OCI-LY7 (cell line): ENCODE measurements at regions of chr7 and their contacts with region 1.

Region 1: GRCh38 chr7:49333180-49333881 is 409.0 kb downstream of the CDC14C start:
- DNase-seq: peak; percentile 94
- H3K4me3 ChIP-seq: peak overlapping the region; percentile 45
- H3K27ac ChIP-seq: peak overlapping the region; percentile 100
- H3K4me1 ChIP-seq: peaks cover 58% of the 10 kb centered on the region
- CTCF ChIP-seq: no peak

Region 2: DNA sequence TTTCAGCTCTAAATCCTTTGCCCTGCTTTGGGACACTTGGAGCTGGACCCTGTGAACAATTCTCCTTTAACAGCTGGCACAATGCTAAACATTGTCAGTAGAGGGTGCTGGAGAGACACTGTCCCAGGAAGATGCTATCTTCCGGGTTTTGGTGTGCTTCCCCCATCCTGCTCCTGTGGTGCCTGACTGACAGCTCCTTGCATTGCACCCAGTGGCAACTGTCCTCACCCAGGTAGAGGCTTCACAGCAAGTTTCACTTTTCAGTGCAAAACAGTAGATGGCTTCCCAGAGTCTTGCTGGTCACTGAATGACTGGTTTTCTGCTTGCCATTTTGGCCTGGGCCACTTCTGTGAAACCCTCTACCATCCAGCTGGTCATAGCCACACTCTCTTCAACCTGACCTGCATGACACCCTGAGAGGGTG is 331.7 kb before region 1 on chr7:
- CTCF ChIA-PET with region 1: no interaction called
- POLR2A ChIA-PET with region 1: no interaction called
- intact Hi-C with region 1: loop called (anchors 10 kb)
- DNase-seq: peak; percentile 83
- H3K4me3 ChIP-seq: no peak overlapping the region
- H3K27ac ChIP-seq: no peak overlapping the region
- H3K4me1 ChIP-seq: peaks cover 6% of the 10 kb centered on the region
- CTCF ChIP-seq: peak; percentile 89

Region 3: DNA sequence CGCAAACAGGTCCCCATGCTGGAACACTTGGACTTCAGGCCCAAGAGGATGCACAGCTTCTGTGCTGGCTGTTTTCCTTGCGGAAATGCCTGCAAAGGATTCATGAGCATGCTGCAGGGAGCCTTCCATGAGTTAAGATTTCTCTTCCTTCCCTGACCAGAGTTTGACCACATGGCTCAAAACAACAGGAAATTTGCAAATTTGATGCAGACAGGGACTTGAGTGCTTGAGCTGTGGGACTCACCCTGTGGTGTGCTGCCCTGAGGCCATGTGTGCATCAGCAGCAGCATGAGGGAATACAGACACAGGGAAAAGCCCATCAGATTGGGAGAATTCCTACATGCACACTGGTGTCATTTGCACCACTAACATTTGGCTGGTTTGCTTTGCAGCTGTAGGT is 213.6 kb before region 1 on chr7:
- CTCF ChIA-PET with region 1: no interaction called
- POLR2A ChIA-PET with region 1: no interaction called
- intact Hi-C with region 1: no loop called
- DNase-seq: no peak
- H3K4me3 ChIP-seq: no peak overlapping the region
- H3K27ac ChIP-seq: no peak overlapping the region
- H3K4me1 ChIP-seq: no peaks in the 10 kb centered on the region
- CTCF ChIP-seq: no peak

Region 4: GRCh38 chr7:49371771-49372170 is 38.4 kb after region 1 on chr7:
- CTCF ChIA-PET with region 1: no interaction called
- POLR2A ChIA-PET with region 1: no interaction called
- intact Hi-C with region 1: no loop called
- DNase-seq: no peak
- H3K4me3 ChIP-seq: no peak overlapping the region
- H3K27ac ChIP-seq: no peak overlapping the region
- H3K4me1 ChIP-seq: peaks cover 4% of the 10 kb centered on the region
- CTCF ChIP-seq: no peak

Region 5: DNA sequence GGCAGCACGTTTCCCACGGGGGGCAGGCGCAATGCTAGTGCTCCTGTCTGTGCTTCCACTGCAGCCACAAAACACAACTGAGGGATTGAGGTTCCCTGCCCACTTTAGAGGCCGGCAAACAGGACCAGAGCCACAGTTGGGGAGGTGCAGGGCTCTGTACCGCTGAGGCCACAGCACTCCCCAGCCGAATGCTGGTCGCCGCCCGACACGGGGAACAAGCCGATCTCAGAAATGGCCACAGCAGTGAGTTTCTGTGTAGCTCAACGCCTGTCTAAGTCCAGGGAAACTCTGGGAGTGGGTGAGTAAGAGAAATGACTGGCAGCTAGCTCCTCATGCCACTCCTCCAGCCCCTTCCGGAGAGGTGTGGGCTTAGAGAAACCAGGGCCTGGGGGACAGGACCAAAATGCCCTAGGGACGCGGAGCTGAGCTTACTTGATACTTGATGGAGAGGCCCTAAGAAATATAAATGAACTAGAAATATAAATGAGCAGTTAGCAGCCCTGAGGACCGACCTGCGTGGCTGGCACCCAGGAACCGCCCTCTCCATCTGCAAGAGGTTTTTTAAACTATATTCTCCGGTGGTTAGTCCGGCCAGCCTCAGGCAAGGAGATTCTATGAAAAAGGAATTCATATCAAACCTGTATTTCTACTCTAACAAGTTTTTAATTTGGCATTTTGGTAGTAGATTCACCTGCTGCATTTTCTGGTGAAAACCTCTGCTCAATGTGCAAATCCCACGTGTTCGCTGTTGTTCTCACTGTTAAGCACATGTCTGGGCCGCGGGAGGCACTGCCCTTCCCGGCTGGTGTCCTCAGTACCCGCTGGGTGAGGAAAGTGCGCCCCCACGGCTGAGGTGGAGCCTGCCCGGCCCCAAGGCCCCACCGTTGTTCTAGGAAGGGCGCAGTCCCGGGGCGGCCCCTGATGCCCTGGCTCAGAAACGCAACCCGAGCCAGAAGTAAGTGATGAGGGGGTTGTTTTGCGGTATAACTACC is 246.4 kb after region 1 on chr7:
- CTCF ChIA-PET with region 1: no interaction called
- POLR2A ChIA-PET with region 1: no interaction called
- intact Hi-C with region 1: loop called (anchors 1 kb)
- DNase-seq: no peak
- H3K4me3 ChIP-seq: no peak overlapping the region
- H3K27ac ChIP-seq: no peak overlapping the region
- H3K4me1 ChIP-seq: peaks cover 41% of the 10 kb centered on the region
- CTCF ChIP-seq: no peak

Region 6: DNA sequence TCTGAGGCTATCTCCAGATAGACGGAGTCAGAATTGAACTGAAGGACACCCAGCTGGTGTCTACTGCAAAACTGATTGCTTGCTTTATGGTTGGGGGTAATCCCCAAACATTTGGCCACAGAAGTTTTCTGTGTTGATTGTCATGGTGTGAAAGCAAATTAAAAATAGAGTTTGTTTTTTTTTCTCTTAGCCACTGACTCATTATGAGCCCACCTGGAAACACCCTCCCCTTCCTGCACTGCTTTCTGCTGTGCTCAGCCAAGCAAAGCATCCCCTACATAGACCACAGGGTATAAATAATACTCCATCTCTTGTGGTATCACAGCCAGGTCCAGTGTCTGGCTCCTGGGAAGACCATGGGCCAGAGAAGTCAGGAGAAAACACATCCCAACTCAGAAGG is 433.6 kb after region 1 on chr7:
- CTCF ChIA-PET with region 1: no interaction called
- POLR2A ChIA-PET with region 1: no interaction called
- intact Hi-C with region 1: loop called (anchors 2 kb)
- DNase-seq: peak; percentile 93
- H3K4me3 ChIP-seq: peak overlapping the region; percentile 49
- H3K27ac ChIP-seq: peak overlapping the region; percentile 92
- H3K4me1 ChIP-seq: peaks cover 88% of the 10 kb centered on the region
- CTCF ChIP-seq: no peak

Region 7: DNA sequence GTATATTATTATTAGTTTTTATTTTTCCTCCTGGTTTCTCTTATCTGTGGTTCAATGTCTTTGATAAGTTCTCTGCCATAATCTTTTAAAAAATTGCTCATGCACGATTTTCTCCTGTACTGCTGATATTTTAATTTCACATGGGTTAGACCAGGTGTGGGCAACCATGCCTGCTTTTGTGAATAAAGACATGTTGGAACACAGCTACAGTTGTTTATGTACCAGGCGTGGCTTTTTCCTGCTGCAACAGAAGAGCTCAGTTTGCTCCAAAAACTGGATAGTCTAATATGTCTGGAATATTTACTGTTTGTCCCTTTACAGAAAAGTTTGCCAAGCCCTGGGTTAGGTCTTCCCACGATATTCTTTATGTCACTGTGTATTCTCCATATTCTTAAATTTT is 545.3 kb after region 1 on chr7:
- CTCF ChIA-PET with region 1: no interaction called
- POLR2A ChIA-PET with region 1: no interaction called
- intact Hi-C with region 1: loop called (anchors 10 kb)
- DNase-seq: no peak
- H3K4me3 ChIP-seq: no peak overlapping the region
- H3K27ac ChIP-seq: no peak overlapping the region
- H3K4me1 ChIP-seq: peaks cover 22% of the 10 kb centered on the region
- CTCF ChIP-seq: no peak